Common myeloid progenitor, CD34-positive (primary cell): ENCODE measurements at regions of chr22 and their contacts with region 1.

Region 1: GRCh38 chr22:24758164-24758799 is 16.2 kb downstream of the PIWIL3 start:
- DNase-seq: peak; percentile 67 to 81 (median 70)
- H3K4me3 ChIP-seq: no peak overlapping the region
- H3K27ac ChIP-seq: no peak overlapping the region
- H3K4me1 ChIP-seq: peaks cover 3 to 24% (median 14%) of the 10 kb centered on the region in 4 experiments
- H3K27me3 ChIP-seq: peaks cover 0 to 5% (median 0%) of the 10 kb centered on the region in 5 experiments

Region 2: DNA sequence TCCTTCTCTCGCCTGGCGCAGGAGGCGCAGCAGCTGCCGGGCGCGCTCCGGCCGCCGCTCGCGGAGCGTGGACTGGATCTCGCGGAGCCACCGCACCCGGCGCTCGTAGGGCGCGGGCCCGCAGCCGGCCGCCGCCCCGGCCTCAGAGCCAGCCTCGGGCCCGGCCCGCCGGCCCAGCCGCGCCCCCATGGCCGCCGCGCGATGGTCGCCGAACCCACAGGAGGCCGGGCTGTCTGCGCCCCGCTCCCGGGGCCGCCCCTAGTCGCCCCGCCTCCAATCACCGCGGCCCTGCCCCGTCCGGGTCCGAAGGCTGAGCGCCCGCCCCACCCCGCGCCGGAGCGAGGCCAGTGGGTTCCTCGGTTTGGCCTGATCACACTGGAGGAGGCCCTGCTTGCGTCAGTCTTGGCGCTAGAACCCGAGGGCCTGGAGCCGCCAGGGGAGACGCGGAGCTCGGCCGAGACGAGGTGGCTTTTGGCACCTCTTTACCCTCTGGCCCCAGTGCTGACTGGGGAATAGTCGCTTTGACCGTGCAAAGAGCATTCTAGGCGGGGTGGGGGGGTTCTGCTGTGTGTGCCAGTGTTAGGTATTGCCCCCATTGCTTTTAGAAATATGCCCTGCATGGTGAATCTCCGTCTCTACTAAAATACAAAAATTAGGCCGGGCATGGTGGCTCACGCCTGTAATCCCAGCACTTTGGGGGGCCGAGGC is 165.3 kb before region 1 on chr22 and contains the start of gene LRRC75B:
- CTCF ChIA-PET with region 1: no interaction called
- POLR2A ChIA-PET with region 1: no interaction called
- DNase-seq: peak; percentile 57 to 75 (median 62)
- H3K4me3 ChIP-seq: peak within 1 kb of the TSS; percentile 30 to 73 (median 64)
- H3K27ac ChIP-seq: peak within 1 kb of the TSS in 1 of 2 experiments; percentile 25
- H3K4me1 ChIP-seq: peaks cover 0 to 25% (median 11%) of the 10 kb centered on the region in 4 experiments
- H3K27me3 ChIP-seq: no peaks in the 10 kb centered on the region

Region 3: DNA sequence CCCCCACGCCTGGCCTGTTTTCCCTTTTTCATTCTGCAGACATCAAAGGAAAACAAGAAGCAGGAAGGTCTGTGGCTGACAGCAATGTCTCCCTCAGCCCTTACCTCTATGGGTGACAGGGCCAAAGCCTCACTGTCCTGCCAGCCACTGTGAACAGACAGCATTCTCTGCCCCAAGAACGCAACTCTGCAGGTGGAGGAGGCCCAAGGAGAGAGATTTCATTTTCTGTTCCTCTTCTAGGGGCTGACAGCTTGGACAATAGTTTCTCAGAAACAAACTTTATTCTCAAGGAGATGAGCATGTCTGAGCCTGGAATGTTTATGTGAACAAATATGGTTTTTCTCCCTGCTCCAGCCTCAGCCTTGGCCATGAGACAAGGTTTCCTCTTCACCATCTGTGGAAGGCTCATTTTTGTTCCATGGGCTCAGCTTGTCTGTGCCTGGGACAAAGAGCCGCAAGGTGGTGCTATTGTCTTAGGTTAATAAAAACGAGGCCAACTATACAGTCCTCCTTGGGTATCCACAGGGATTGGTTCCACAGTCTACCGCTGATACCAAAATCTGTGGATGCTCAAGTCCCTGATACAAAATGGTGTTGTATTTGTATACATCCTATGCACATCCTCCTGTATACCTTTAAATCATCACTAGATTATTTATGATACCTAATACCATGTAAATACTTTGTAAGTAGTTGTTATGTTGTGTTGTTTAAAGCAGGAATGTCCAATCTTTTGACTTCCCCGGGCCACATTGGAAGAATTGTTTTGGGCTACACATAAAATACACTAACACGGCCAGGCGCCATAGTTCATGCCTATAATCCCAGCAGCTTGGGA is 10.5 kb after region 1 on chr22:
- CTCF ChIA-PET with region 1: interaction called, 29 read pairs
- POLR2A ChIA-PET with region 1: no interaction called
- DNase-seq: peak; percentile 34 to 73 (median 55)
- H3K4me3 ChIP-seq: no peak overlapping the region
- H3K27ac ChIP-seq: no peak overlapping the region
- H3K4me1 ChIP-seq: peaks cover 0 to 2% (median under 1%) of the 10 kb centered on the region in 4 experiments
- H3K27me3 ChIP-seq: peaks cover 0 to 3% (median 1%) of the 10 kb centered on the region in 5 experiments

Region 4: GRCh38 chr22:24819911-24820461 is 61.7 kb after region 1 on chr22:
- CTCF ChIA-PET with region 1: no interaction called
- POLR2A ChIA-PET with region 1: no interaction called
- DNase-seq: no peak
- H3K4me3 ChIP-seq: no peak overlapping the region
- H3K27ac ChIP-seq: no peak overlapping the region
- H3K4me1 ChIP-seq: peaks cover 0 to 4% (median 2%) of the 10 kb centered on the region in 4 experiments
- H3K27me3 ChIP-seq: peaks cover 0 to 3% (median 0%) of the 10 kb centered on the region in 5 experiments